ENCODE measurements at regions of chr1 and their contacts with region 1.

Region 1: GRCh38 chr1:80896957-80897356 is 903.8 kb upstream of the ADGRL2 start:
- DNase-seq: no peak
- ATAC-seq: no peak
- H3K4me3 ChIP-seq: no peak overlapping the region
- H3K27ac ChIP-seq: no peak overlapping the region
- H3K4me1 ChIP-seq: peaks cover 0 to 7% (median 0%) of the 10 kb centered on the region in 9 donors
- H3K27me3 ChIP-seq: no peaks in the 10 kb centered on the region
- CTCF ChIP-seq: no peak

Region 2: DNA sequence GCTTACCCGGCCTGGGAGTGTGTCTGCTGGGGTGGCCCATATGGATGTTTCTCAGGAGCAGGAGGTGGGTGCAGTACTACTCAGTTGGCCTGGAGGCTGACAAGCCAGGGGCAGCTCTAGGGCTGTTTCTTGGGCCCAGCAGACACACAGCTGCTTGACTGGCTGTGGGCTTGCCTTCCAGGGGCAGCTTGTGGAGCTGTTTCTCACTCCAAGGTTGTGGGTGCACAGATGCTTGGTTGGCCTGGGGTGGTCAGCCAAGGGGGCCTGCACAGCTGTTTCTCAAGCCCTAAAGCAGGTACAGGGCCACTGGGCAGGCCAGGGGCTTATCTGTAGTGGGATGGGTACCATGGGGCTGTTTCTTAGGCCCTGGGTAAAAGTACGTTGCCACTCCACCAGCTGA is 174.3 kb before region 1 on chr1:
- intact Hi-C with region 1: no loop called
- DNase-seq: no peak
- ATAC-seq: no peak
- H3K4me3 ChIP-seq: no peak overlapping the region
- H3K27ac ChIP-seq: no peak overlapping the region
- H3K4me1 ChIP-seq: no peaks in the 10 kb centered on the region
- H3K27me3 ChIP-seq: no peaks in the 10 kb centered on the region
- CTCF ChIP-seq: no peak

Region 3: DNA sequence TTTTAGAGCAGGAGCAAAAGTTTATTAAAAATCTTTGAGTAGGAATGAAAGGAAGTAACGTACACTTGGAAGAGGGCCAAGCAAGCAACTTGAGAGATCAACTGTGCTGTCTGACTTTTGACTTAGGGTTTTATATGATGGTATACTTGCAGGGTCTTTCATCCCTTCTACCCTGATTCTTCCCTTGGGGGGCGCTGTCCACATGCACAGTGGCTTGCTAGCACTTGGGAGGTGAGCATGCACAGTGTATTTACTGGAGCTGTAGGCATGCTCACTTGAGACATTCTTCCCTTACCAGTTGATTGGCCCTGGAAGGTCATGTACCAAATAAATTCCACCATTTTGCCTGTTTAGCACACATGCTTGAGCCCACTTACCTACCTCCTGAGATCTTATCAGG is 97.5 kb before region 1 on chr1:
- intact Hi-C with region 1: no loop called
- DNase-seq: no peak
- ATAC-seq: no peak
- H3K4me3 ChIP-seq: no peak overlapping the region
- H3K27ac ChIP-seq: no peak overlapping the region
- H3K4me1 ChIP-seq: no peaks in the 10 kb centered on the region
- H3K27me3 ChIP-seq: no peaks in the 10 kb centered on the region
- CTCF ChIP-seq: no peak

Region 4: DNA sequence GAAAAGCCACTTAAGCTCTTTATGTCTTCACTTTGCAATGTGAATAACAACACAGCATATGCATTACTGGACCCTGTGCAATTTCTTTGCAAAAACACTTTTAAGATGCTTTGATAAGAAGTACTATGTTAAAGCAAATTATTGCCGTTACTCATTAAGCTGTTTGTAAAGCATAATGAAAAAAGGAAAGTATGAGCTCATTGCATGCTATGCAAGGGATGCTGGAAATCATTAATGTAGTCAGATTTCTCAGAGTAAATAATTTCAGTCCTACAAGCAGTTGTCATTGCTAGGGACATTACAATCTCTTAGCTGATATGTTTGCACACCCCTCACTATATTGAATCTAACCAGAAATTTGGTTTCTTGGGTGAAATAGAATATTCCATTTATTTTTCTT is 78.8 kb before region 1 on chr1:
- intact Hi-C with region 1: no loop called
- DNase-seq: no peak
- ATAC-seq: no peak
- H3K4me3 ChIP-seq: no peak overlapping the region
- H3K27ac ChIP-seq: no peak overlapping the region
- H3K4me1 ChIP-seq: no peaks in the 10 kb centered on the region
- H3K27me3 ChIP-seq: no peaks in the 10 kb centered on the region
- CTCF ChIP-seq: no peak

Region 5: GRCh38 chr1:80836505-80836904 is 60.5 kb before region 1 on chr1:
- intact Hi-C with region 1: loop called in 1 of 10 experiments (anchors 1 kb)
- DNase-seq: no peak
- ATAC-seq: no peak
- H3K4me3 ChIP-seq: no peak overlapping the region
- H3K27ac ChIP-seq: no peak overlapping the region
- H3K4me1 ChIP-seq: no peaks in the 10 kb centered on the region
- H3K27me3 ChIP-seq: no peaks in the 10 kb centered on the region
- CTCF ChIP-seq: no peak